K562 (cell line): ENCODE measurements at regions of chr17 and their contacts with region 1.

Region 1: GRCh38 chr17:63600569-63601438 is at the start of gene TACO1:
- DNase-seq: peak; percentile 89 to 92 (median 92)
- ATAC-seq: peak; percentile 98
- H3K4me3 ChIP-seq: peak within 1 kb of the TSS; percentile 76
- H3K27ac ChIP-seq: peak within 1 kb of the TSS; percentile 78
- H3K4me1 ChIP-seq: peaks cover 13 to 18% of the 10 kb centered on the region in 2 experiments; a peak in 3 of 5 replicates
- H3K27me3 ChIP-seq: no peaks in the 10 kb centered on the region
- CTCF ChIP-seq: no peak
- EP300 ChIP-seq: no peak
- POLR2A ChIP-seq: peak; percentile 87
- RAD21 ChIP-seq: peak in 1 of 2 experiments; percentile 33; a peak in 2 of 4 replicates
- polyA plus RNA-seq, gene TACO1: 10.3 to 10.4 TPM

Region 2: GRCh38 chr17:63419949-63420867 is 180.6 kb before region 1 on chr17:
- CTCF ChIA-PET with region 1: no interaction called
- POLR2A ChIA-PET with region 1: no interaction called
- in situ Hi-C with region 1: loop called (anchors 5 kb)
- intact Hi-C with region 1: no loop called
- DNase-seq: peak; percentile 80 to 87 (median 84)
- ATAC-seq: peak; percentile 83
- H3K4me3 ChIP-seq: no peak overlapping the region; the same call in 1 of the 2 replicates
- H3K27ac ChIP-seq: peak overlapping the region; percentile 71
- H3K4me1 ChIP-seq: peaks cover 12 to 30% of the 10 kb centered on the region in 2 experiments
- H3K27me3 ChIP-seq: no peaks in the 10 kb centered on the region
- CTCF ChIP-seq: no peak
- EP300 ChIP-seq: peak; percentile 85; the same call in 1 of the 2 replicates
- POLR2A ChIP-seq: no peak
- RAD21 ChIP-seq: no peak